ENCODE measurements at regions of chr20 and their contacts with region 1.

Region 1: DNA sequence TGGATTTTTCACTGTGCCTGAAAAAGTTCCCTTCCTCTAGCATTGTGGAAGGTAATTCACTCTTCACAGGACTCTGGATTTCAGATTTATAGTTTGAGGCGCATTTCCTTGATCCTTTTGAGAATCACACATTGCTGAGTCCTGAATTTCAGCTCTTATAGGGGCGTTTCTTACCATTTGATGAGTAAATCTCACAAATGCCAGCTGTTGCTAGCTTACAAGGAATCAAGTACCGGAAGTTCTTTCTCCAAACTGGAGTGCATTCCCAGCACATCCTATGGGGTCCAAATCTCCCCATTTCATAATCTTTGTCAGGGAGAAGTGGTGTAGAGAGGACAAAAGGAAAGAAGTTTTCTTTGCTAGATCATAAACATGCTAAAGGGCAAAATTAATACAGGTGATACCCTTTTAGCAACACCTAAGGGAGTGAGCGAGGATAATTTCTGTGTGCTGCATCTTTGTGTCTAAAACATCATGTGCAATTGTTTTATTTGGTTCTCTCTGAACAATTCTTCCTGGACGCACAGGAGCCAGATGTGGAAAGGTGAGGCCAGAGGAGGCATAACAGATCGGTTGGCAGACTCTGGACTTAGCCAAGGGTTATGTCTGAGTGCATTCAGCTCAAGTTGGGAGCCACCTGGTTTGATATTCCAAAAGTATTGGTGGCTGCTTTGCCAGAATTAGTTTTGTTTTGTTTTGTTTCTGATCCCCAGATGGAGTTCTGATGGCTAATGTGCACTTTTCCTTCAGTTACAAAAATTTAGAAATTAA is 37.4 kb upstream of the EYA2 start:
- DNase-seq: no peak
- H3K4me3 ChIP-seq: no peak overlapping the region
- H3K27ac ChIP-seq: no peak overlapping the region
- H3K4me1 ChIP-seq: no peaks in the 10 kb centered on the region
- H3K27me3 ChIP-seq: peaks cover 0 to under 1% (median 0%) of the 10 kb centered on the region in 3 donors
- CTCF ChIP-seq: no peak
- EP300 ChIP-seq: no peak
- POLR2A ChIP-seq: no peak

Region 2: GRCh38 chr20:46923550-46923949 is 66.3 kb after region 1 on chr20:
- intact Hi-C with region 1: no loop called
- DNase-seq: no peak
- H3K4me3 ChIP-seq: no peak overlapping the region
- H3K27ac ChIP-seq: no peak overlapping the region
- H3K4me1 ChIP-seq: no peaks in the 10 kb centered on the region
- H3K27me3 ChIP-seq: no peaks in the 10 kb centered on the region
- CTCF ChIP-seq: no peak
- EP300 ChIP-seq: no peak
- POLR2A ChIP-seq: no peak

Region 3: DNA sequence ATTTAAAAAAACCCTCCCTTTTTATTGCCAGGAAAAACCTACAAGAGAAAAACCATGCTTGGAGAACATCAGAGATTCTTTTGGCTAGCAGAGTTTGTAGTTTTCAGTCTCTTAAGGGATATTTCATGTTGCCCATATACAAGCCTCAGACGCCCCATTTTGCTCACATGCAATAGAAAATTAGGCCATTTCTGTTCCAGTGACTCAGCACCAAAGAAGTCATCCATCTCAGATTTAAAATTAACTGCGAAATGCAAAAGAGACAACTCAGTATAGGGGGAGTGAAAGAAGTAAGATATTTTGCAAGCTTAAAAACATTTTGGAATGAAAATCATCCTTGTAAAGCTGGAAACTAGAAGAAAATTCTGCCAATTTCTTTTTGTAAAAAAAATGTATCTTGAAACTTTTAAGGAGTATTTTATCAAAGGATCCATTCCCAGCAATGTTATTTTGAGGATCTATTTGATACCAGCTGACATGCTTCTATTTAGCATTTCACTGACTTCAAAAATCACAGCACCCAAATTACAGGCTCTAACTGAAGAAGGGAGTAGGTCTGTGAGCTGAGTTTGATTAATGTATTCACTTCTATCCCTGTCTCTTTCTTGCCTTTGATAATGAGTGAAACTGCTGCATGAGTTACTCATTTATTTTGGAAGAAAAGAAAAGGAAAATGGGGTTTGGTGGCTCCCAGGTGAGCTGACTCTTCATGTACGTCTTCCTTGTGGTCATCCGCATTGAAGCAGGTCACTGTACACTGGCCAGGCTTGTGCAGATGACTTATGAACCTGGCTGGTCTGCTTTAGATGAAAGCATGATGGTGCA is 1151.8 kb after region 1 on chr20:
- intact Hi-C with region 1: loop called (anchors 5 kb)
- DNase-seq: no peak
- H3K4me3 ChIP-seq: no peak overlapping the region
- H3K27ac ChIP-seq: no peak overlapping the region
- H3K4me1 ChIP-seq: peaks cover 0 to 6% (median 0%) of the 10 kb centered on the region in 4 donors
- H3K27me3 ChIP-seq: peaks cover 0 to 7% (median 0%) of the 10 kb centered on the region in 3 donors
- CTCF ChIP-seq: no peak
- EP300 ChIP-seq: no peak
- POLR2A ChIP-seq: no peak